ENCODE measurements at regions of chr9 and their contacts with region 1.

Region 1: DNA sequence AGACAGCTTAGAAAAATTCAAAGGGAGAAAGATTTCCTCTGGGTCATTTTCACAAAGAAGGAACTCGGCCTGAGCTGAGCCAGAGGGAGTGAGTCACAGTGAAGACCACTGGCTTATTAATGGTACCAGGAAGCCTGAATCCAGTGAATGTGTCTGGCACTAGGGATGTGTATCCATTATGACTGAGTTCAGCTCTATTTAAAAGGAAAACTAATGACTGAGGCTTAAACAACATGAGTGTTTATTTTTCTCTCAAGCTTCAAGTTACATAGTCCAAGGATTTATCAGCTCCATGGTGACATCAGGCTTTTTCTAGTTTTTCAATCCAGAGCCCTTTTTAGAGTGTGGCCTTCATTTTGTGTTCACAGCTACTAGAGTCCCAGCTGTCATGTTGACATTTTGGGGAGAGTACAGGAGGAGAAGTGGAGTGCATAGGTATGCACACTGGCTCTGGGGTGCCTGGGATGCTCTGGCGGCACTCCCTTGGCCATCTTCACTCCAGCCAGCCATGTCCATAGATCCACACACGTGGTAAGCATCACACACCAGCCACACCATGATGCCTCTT is 159.5 kb upstream of the ERCC6L2 start:
- DNase-seq: no peak
- H3K4me3 ChIP-seq: no peak overlapping the region
- H3K27ac ChIP-seq: no peak overlapping the region
- H3K4me1 ChIP-seq: peaks cover 0 to 3% of the 10 kb centered on the region in 2 experiments; a peak in 1 of 4 replicates
- H3K27me3 ChIP-seq: no peaks in the 10 kb centered on the region
- CTCF ChIP-seq: no peak
- EP300 ChIP-seq: no peak
- RAD21 ChIP-seq: no peak

Region 2: GRCh38 chr9:95726756-95727155 is 10.8 kb after region 1 on chr9:
- CTCF ChIA-PET with region 1: interaction called, 11 read pairs
- POLR2A ChIA-PET with region 1: no interaction called
- DNase-seq: peak; percentile 63
- H3K4me3 ChIP-seq: peak overlapping the region in 1 of 2 experiments; percentile 25; a peak in 1 of 4 replicates
- H3K27ac ChIP-seq: no peak overlapping the region
- H3K4me1 ChIP-seq: no peaks in the 10 kb centered on the region
- H3K27me3 ChIP-seq: no peaks in the 10 kb centered on the region
- CTCF ChIP-seq: peak; percentile 74
- EP300 ChIP-seq: no peak
- RAD21 ChIP-seq: peak; percentile 75

Measured in SK-N-SH (cell line).